ENCODE measurements at regions of chr13 and their contacts with region 1.

Region 1: GRCh38 chr13:47215741-47216140 is 318.9 kb upstream of the HTR2A start:
- DNase-seq: peak; percentile 87
- ATAC-seq: peak; percentile 85
- H3K4me3 ChIP-seq: no peak overlapping the region
- H3K27ac ChIP-seq: peak overlapping the region; percentile 20; the same call in 1 of the 2 replicates
- H3K4me1 ChIP-seq: peaks cover 2% of the 10 kb centered on the region; the same call in 1 of the 2 replicates
- H3K27me3 ChIP-seq: no peaks in the 10 kb centered on the region
- CTCF ChIP-seq: no peak
- POLR2A ChIP-seq: no peak
- RAD21 ChIP-seq: no peak

Region 2: DNA sequence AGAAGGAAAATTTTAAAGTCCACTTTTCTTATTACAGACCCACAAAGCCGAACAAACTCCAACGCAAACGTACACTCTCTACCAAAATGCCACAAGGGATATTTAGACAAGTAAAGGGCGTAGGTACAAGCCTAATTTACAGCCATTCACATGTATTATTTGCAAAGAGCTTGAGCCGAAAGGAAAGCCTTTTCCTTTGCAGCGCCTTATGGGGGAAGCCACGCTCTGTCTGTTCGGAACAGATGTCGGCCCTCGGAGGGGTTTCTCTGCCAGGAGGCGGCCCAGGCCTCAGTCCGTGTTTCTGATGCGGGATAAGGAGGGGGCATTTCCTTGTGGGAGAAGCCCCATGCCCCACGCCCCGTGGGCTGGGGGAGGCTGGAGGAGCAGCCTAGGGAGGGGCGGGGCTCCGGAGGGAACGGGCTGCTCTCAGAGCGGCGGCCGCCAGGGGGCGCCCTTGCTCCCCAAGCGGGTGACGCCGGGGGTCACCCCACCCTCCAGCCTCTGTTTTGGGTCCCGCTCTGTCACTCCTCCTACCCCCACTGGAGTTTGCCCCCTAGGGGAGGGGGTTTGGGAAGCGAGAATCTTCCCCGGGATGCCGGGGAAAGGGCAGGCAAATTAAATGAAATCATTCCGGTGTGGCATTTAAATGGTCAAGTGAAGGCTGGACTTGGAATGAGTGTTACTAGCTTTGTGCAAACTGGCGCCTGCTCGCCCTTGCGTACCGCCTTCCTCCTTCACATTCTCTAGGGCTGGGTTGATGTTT is 321.8 kb before region 1 on chr13:
- CTCF ChIA-PET with region 1: no interaction called
- POLR2A ChIA-PET with region 1: no interaction called
- dilution Hi-C with region 1: no loop called
- in situ Hi-C with region 1: no loop called
- intact Hi-C with region 1: loop called (anchors 10 kb)
- DNase-seq: peak; percentile 17
- ATAC-seq: peak; percentile 95
- H3K4me3 ChIP-seq: peak overlapping the region; percentile 63
- H3K27ac ChIP-seq: no peak overlapping the region; the same call in 1 of the 2 replicates
- H3K4me1 ChIP-seq: no peaks in the 10 kb centered on the region
- H3K27me3 ChIP-seq: peaks cover 20% of the 10 kb centered on the region
- CTCF ChIP-seq: peak; percentile 77
- POLR2A ChIP-seq: no peak
- RAD21 ChIP-seq: peak; percentile 62

Region 3: GRCh38 chr13:47146991-47147811 is 68.5 kb before region 1 on chr13:
- CTCF ChIA-PET with region 1: no interaction called
- POLR2A ChIA-PET with region 1: no interaction called
- dilution Hi-C with region 1: no loop called
- in situ Hi-C with region 1: no loop called
- intact Hi-C with region 1: no loop called
- DNase-seq: no peak
- ATAC-seq: no peak
- H3K4me3 ChIP-seq: no peak overlapping the region
- H3K27ac ChIP-seq: no peak overlapping the region
- H3K4me1 ChIP-seq: peaks cover 4% of the 10 kb centered on the region
- H3K27me3 ChIP-seq: no peaks in the 10 kb centered on the region
- CTCF ChIP-seq: no peak
- POLR2A ChIP-seq: no peak
- RAD21 ChIP-seq: no peak

Region 4: GRCh38 chr13:47549219-47549752 is 333.5 kb after region 1 on chr13:
- CTCF ChIA-PET with region 1: no interaction called
- POLR2A ChIA-PET with region 1: no interaction called
- dilution Hi-C with region 1: no loop called
- in situ Hi-C with region 1: no loop called
- intact Hi-C with region 1: no loop called
- DNase-seq: no peak
- ATAC-seq: no peak
- H3K4me3 ChIP-seq: no peak overlapping the region
- H3K27ac ChIP-seq: no peak overlapping the region
- H3K4me1 ChIP-seq: peaks cover 3% of the 10 kb centered on the region; the same call in 1 of the 2 replicates
- H3K27me3 ChIP-seq: no peaks in the 10 kb centered on the region; the same call in 1 of the 2 replicates
- CTCF ChIP-seq: no peak
- POLR2A ChIP-seq: no peak
- RAD21 ChIP-seq: no peak

Region 5: DNA sequence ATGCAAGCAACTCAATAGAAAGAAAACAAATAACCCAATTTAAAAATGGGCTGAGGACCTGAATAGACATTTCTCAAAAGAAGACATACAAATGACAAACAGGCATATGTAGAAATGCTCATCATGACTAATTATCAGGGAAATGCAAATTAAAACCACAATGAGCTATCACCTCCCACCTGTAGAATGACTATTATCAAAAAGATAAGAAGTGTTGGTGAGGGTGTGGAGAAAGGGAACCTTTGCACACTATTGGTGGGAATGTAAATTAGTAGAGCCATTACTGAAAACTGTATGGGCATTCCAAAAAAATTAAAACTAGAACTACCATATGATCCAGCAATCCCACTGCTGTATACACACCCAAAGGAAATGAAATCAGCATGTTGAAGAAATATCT is 573.1 kb after region 1 on chr13:
- CTCF ChIA-PET with region 1: no interaction called
- POLR2A ChIA-PET with region 1: no interaction called
- dilution Hi-C with region 1: no loop called
- in situ Hi-C with region 1: no loop called
- intact Hi-C with region 1: no loop called
- DNase-seq: no peak
- ATAC-seq: no peak
- H3K4me3 ChIP-seq: no peak overlapping the region
- H3K27ac ChIP-seq: no peak overlapping the region
- H3K4me1 ChIP-seq: no peaks in the 10 kb centered on the region
- H3K27me3 ChIP-seq: no peaks in the 10 kb centered on the region; the same call in 1 of the 2 replicates
- CTCF ChIP-seq: no peak
- POLR2A ChIP-seq: no peak
- RAD21 ChIP-seq: no peak

Measured in IMR-90 (cell line).